Naive thymus-derived CD4-positive, alpha-beta T cell (primary cell): ENCODE measurements at regions of chr2 and their contacts with region 1.

Region 1: DNA sequence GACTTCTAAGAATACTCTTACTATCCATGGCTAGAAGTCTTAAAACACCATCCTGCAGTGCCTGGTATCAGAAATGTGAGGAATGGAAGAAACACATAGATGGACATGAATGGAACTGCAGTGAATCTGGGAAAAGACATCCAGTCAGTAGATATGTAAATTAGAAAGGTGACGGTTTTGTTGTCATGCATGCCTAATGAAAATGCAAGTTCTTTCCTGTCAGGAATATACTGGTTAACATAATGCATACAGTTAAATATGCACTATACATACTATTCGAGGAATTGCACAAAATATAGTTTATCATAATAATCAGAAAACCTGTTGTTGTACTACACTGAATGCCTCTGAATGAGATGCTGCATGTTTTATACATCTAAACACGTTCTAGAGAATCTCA is 190.6 kb upstream of the ITGA4 start:
- DNase-seq: no peak
- ATAC-seq: no peak
- H3K4me3 ChIP-seq: no peak overlapping the region
- H3K4me3 Mint-ChIP-seq: no peak overlapping the region
- H3K27ac ChIP-seq: no peak overlapping the region
- H3K27ac Mint-ChIP-seq: no peak overlapping the region
- H3K4me1 ChIP-seq: peaks cover 0 to 3% of the 10 kb centered on the region in 2 donors
- H3K4me1 Mint-ChIP-seq: peaks cover 13 to 55% (median 36%) of the 10 kb centered on the region in 7 donors
- H3K27me3 ChIP-seq: no peaks in the 10 kb centered on the region
- H3K27me3 Mint-ChIP-seq: no peaks in the 10 kb centered on the region

Region 2: DNA sequence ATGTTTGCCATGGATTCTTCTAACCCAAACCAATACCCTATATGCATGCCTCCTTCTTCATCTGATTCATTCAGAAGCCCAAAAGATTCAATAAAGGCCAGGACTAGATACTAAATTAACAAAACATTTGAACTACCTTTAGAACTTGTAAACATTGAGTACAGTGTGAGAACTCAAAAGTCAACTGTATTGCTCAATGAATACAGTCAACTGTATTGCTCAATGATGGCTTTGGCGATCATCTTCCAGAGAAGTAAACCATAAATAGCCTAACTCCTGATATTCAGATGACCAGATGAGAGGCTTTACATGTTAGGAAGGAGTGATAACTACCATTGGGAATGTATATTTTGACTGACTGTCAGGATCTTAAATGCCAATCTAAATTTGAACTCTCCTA is 15.9 kb before region 1 on chr2:
- CTCF ChIA-PET with region 1: no interaction called
- POLR2A ChIA-PET with region 1: interaction called, 4 read pairs
- intact Hi-C with region 1: loop called in 1 of 2 experiments (anchors 2 kb)
- DNase-seq: no peak
- ATAC-seq: no peak
- H3K4me3 ChIP-seq: no peak overlapping the region
- H3K4me3 Mint-ChIP-seq: no peak overlapping the region
- H3K27ac ChIP-seq: no peak overlapping the region
- H3K27ac Mint-ChIP-seq: peak overlapping the region in 2 of 9 donors; percentile 6 to 42
- H3K4me1 ChIP-seq: peaks cover 5 to 12% of the 10 kb centered on the region in 2 donors
- H3K4me1 Mint-ChIP-seq: peaks cover 15 to 34% (median 23%) of the 10 kb centered on the region in 7 donors
- H3K27me3 ChIP-seq: no peaks in the 10 kb centered on the region
- H3K27me3 Mint-ChIP-seq: no peaks in the 10 kb centered on the region

Region 3: GRCh38 chr2:181438261-181438660 is 171.6 kb after region 1 on chr2:
- CTCF ChIA-PET with region 1: no interaction called
- POLR2A ChIA-PET with region 1: no interaction called
- intact Hi-C with region 1: no loop called
- DNase-seq: peak in 1 of 9 donors; percentile 34
- ATAC-seq: peak; percentile 37
- H3K4me3 ChIP-seq: no peak overlapping the region
- H3K4me3 Mint-ChIP-seq: no peak overlapping the region
- H3K27ac ChIP-seq: no peak overlapping the region
- H3K27ac Mint-ChIP-seq: peak overlapping the region in 1 of 9 donors; percentile 45
- H3K4me1 ChIP-seq: no peaks in the 10 kb centered on the region
- H3K4me1 Mint-ChIP-seq: peaks cover 0 to 28% (median 15%) of the 10 kb centered on the region in 7 donors
- H3K27me3 ChIP-seq: no peaks in the 10 kb centered on the region
- H3K27me3 Mint-ChIP-seq: peaks cover 0 to 2% (median 0%) of the 10 kb centered on the region in 5 donors